Activated CD4-positive, alpha-beta memory T cell treated with anti-CD3 and anti-CD28 coated beads for 36 hours (primary cell): ENCODE measurements at regions of chr6 and their contacts with region 1.

Region 1: GRCh38 chr6:42771741-42772100 is 10.1 kb upstream of the BICRAL start:
- DNase-seq: no peak
- H3K4me3 Mint-ChIP-seq: peak overlapping the region; percentile 74
- H3K27ac Mint-ChIP-seq: peak overlapping the region; percentile 98
- H3K4me1 Mint-ChIP-seq: peaks cover 56% of the 10 kb centered on the region
- H3K27me3 Mint-ChIP-seq: no peaks in the 10 kb centered on the region

Region 2: DNA sequence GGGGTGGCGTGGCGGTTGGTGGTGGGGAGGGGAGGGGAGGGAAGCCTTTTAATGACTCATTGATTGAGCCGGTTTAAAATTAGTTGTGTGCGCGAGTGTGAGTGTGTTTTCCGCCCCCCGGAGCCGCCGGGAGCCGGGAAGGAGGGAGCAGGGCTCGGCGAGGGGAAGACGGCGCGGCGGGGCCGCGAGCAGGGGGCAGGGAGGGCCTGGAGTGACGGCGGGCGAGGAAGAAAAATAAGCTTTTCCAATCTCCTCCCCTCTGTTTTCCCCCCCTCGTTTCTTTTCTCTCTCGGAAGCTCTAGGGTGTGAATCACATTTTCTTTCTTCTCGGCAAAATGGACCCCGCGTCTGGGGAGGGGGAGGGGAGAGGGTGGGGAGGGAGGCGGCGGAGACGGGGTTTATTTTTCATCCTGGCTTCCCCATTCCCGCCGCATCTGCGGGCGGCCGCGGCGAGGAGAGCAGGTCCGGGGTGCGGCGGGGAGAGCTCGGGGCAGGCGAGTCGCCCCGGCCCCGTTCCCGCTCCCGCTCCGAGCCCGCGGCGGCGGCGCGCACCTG is 11.0 kb after region 1 on chr6:
- CTCF ChIA-PET with region 1: interaction called, 5 read pairs
- POLR2A ChIA-PET with region 1: interaction called, 108 read pairs
- intact Hi-C with region 1: loop called (anchors 1 kb)
- DNase-seq: peak; percentile 80
- H3K4me3 Mint-ChIP-seq: peak overlapping the region; percentile 81
- H3K27ac Mint-ChIP-seq: peak overlapping the region; percentile 95
- H3K4me1 Mint-ChIP-seq: peaks cover 26% of the 10 kb centered on the region
- H3K27me3 Mint-ChIP-seq: no peaks in the 10 kb centered on the region

Region 3: DNA sequence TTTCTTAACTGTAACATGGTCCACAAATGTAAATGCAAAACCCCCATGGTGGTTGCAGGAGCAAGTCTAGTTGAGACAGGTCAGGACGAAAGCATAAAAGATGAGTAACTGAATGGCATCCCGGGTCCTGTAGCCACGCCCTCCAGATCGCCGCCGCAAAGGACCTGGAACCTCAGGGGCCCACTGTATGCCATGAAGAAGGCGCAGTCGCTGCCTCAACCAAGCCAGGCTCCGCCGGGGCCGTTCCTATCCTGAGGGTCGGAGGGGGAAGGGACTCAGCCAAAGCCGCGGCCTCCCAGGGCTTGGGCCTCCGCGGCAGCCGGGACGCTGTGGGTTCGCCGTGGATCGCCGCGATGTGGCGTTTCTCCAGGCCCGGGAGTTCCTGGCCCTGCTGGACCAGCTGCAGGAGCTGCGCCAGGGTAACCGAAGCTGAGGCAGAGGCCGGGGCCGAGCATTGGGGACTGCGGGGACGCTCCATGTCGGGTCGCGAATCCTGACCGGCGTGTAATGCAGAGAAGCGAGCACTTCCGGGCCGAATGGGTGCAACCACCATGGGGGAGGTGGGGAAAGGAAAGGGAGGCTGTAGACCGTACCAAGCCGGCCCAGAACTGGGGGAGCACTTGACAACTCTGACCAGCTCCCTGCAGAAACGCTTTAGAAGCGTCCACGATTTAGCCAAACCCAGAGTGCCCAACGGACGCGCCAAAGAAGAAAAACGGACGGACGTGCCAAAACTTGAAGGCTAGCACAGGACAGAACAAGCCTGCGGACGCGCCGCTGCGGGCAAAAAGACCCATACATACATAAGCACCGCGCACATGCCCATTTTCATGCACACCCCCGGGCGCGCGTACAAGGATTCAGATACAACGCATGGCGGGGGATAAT is 118.8 kb after region 1 on chr6:
- CTCF ChIA-PET with region 1: no interaction called
- POLR2A ChIA-PET with region 1: interaction called, 5 read pairs
- intact Hi-C with region 1: loop called (anchors 1 kb)
- DNase-seq: peak; percentile 96
- H3K4me3 Mint-ChIP-seq: peak overlapping the region; percentile 88
- H3K27ac Mint-ChIP-seq: peak overlapping the region; percentile 94
- H3K4me1 Mint-ChIP-seq: peaks cover 25% of the 10 kb centered on the region
- H3K27me3 Mint-ChIP-seq: no peaks in the 10 kb centered on the region